Endothelial cell of umbilical vein (primary cell): ENCODE measurements at regions of chr5 and their contacts with region 1.

Region 1: DNA sequence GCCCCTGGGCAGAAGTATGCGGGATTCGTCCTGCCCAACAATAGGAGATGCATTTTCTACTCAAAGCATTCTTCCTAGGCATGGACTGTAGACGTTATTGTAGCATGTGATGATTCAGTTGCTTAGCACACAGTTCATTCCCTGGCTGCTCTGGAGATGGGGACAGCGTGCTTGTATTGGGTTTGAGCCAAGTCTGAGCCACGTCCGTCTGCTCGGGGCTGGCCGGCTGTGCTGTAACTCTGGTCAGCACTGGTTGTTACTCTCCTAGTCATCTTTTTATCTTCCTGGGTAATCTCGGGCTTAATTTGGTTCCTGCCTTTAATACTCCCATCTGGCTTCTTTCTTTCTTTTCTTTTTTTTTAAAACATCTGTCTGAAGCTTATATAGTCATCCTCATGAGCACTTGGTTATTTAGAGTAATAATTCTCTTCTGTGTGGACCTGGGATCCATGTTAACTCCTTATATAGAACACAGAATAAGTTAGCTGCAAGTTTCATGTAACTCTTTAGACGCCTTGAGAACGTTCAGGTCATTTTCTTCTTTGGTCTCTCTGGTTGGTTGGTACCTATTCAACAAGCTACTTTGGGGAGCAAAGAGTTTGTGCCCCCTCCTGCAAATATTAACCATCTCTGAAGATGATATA is 118.8 kb upstream of the RPS23 start:
- DNase-seq: peak; percentile 98
- H3K4me3 ChIP-seq: no peak overlapping the region
- H3K27ac ChIP-seq: peak overlapping the region; percentile 82
- H3K4me1 ChIP-seq: peaks cover 18% of the 10 kb centered on the region
- H3K27me3 ChIP-seq: no peaks in the 10 kb centered on the region
- CTCF ChIP-seq: no peak
- POLR2A ChIP-seq: no peak

Region 2: GRCh38 chr5:82421119-82421518 is 24.1 kb after region 1 on chr5:
- CTCF ChIA-PET with region 1: no interaction called
- POLR2A ChIA-PET with region 1: no interaction called
- dilution Hi-C with region 1: no loop called
- intact Hi-C with region 1: no loop called
- DNase-seq: peak; percentile 89
- H3K4me3 ChIP-seq: no peak overlapping the region
- H3K27ac ChIP-seq: no peak overlapping the region
- H3K4me1 ChIP-seq: peaks cover 11% of the 10 kb centered on the region
- H3K27me3 ChIP-seq: no peaks in the 10 kb centered on the region
- CTCF ChIP-seq: peak in 1 of 2 donors; percentile 10
- POLR2A ChIP-seq: no peak

Region 3: GRCh38 chr5:82446809-82447208 is 49.8 kb after region 1 on chr5:
- CTCF ChIA-PET with region 1: no interaction called
- POLR2A ChIA-PET with region 1: no interaction called
- dilution Hi-C with region 1: no loop called
- intact Hi-C with region 1: loop called (anchors 1 kb)
- DNase-seq: no peak
- H3K4me3 ChIP-seq: no peak overlapping the region
- H3K27ac ChIP-seq: no peak overlapping the region
- H3K4me1 ChIP-seq: no peaks in the 10 kb centered on the region
- H3K27me3 ChIP-seq: peaks cover 0 to 13% of the 10 kb centered on the region in 2 experiments
- CTCF ChIP-seq: no peak
- POLR2A ChIP-seq: no peak